ENCODE measurements at regions of chr3 and their contacts with region 1.

Region 1: GRCh38 chr3:112293368-112294321 is at the start of gene SLC9C1:
- DNase-seq: peak; percentile 54
- H3K4me3 ChIP-seq: no peak within 1 kb of the TSS; a peak in 1 of 4 replicates
- H3K27ac ChIP-seq: no peak within 1 kb of the TSS
- H3K4me1 ChIP-seq: peaks cover 0 to 5% of the 10 kb centered on the region in 2 experiments; a peak in 1 of 4 replicates
- H3K27me3 ChIP-seq: no peaks in the 10 kb centered on the region
- CTCF ChIP-seq: peak; percentile 70
- EP300 ChIP-seq: no peak
- RAD21 ChIP-seq: peak; percentile 91
- polyA plus RNA-seq, gene SLC9C1: not detected in 2 replicates

Region 2: DNA sequence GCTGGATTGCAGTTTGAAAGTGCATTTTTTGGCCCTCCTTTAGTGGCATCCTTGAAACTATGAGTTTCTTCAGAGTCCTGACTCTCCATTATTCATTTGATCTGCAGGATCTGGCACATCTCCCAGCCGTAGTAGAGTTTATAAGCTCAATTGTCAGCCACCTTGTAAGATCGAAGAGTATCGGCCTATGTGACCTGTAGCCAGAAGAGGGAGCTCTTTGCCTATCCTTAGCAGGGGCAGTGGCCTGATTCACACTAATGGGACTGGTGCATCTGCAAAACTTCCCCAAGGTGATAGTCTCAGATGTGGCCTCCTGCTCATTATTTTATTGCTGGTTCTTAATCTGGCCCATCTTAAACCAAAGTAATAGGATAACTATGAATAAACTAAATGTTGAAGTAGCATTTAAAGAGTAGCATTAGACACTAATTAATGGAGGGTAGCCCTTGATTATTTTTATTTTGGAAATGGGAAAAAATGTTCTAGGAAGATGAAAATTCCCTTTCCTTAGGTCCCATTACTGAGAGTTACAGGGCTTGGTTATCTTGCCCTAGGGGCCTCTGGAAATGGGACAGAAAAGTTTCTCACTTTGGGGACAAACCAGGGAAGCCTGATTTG is 181.8 kb before region 1 on chr3:
- CTCF ChIA-PET with region 1: interaction called, 22 read pairs
- POLR2A ChIA-PET with region 1: no interaction called
- DNase-seq: peak; percentile 70
- H3K4me3 ChIP-seq: no peak overlapping the region; a peak in 1 of 4 replicates
- H3K27ac ChIP-seq: no peak overlapping the region
- H3K4me1 ChIP-seq: no peaks in the 10 kb centered on the region; a peak in 1 of 4 replicates
- H3K27me3 ChIP-seq: no peaks in the 10 kb centered on the region
- CTCF ChIP-seq: peak; percentile 72
- EP300 ChIP-seq: no peak
- RAD21 ChIP-seq: peak; percentile 89

Region 3: DNA sequence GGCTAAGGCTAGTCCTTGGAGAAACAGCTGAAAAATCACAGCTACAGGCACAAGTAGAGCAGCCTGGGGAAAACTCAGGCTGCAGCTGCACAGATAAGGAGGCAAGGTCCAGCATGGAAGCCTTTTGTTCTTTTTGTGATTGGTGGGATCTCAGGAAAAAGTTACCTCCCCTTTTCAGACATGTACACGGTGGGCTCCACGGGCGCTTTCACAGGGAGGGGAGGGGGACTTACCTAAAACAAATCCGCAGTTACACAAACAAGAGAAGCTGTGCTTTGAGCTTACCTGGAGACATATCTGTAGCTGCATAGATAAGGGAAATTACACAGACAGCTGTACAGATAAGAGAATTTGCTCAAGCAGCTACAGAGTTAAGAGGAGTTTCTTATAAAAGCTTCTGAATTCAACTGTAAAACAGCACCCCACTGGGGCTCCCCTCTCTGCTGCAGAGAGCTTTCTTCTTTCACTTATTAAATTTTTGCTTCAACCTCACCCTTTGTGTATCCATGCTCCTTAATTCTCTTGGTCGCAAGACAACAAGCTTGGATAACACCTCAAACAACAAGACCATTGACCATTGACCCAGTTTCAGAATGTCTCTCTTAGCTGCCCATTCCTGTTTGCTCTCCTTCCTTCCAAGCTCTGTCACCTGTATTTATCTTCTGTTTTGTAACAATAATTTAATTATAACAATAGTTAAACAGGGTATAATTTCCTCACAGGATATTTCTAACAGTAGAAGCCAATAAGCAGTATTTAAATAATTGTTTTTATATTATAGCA is 28.4 kb after region 1 on chr3:
- CTCF ChIA-PET with region 1: interaction called, 20 read pairs
- POLR2A ChIA-PET with region 1: no interaction called
- DNase-seq: peak; percentile 29
- H3K4me3 ChIP-seq: no peak overlapping the region; a peak in 1 of 4 replicates
- H3K27ac ChIP-seq: peak overlapping the region in 1 of 2 experiments; percentile 68; a peak in 1 of 4 replicates
- H3K4me1 ChIP-seq: peaks cover 0 to 4% of the 10 kb centered on the region in 2 experiments; a peak in 2 of 4 replicates
- H3K27me3 ChIP-seq: no peaks in the 10 kb centered on the region; the same call in 1 of the 2 replicates
- CTCF ChIP-seq: no peak
- EP300 ChIP-seq: no peak
- RAD21 ChIP-seq: no peak

Region 4: DNA sequence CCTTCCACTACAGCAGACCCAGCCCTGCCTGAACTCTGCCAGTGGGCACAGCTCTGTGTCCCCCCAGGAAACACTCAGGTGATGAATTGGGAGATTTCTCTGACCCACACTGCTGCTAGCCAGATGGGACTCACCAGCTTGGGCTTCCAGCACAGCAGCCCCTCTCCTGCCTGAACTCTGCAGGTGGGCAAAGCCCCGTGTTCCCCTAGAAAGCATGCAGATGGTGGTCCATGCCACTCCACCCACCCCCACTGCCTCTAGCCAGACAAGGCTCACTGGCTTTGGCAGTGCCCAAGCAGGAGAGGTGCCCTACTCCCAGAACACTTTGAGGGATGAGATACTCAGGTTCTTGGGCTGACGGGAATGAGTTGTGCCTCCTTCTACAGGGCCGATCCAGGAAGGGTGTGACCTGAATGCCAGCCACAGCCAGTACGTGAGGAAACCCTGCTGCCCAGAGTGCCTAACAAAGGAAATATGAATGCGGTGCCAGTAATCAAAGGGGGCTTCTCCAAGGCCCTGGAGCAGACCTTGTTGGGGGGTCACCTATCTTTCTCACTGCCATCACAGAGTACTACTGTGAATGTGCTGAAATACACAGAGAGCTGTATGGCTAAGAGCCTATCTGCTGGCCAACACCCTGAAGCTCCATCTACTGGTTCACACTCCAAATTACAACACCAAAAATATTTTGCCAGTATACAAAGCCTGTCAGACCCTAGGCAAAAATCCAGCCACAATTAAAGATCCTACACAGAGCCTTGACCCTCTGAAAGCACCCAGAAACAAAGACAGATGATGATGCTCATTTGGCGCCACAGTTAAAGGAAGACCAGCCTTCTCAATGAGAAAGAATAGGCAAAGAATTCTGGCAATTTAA is 143.7 kb after region 1 on chr3:
- CTCF ChIA-PET with region 1: interaction called, 14 read pairs
- POLR2A ChIA-PET with region 1: no interaction called
- DNase-seq: no peak
- H3K4me3 ChIP-seq: no peak overlapping the region
- H3K27ac ChIP-seq: no peak overlapping the region
- H3K4me1 ChIP-seq: no peaks in the 10 kb centered on the region
- H3K27me3 ChIP-seq: no peaks in the 10 kb centered on the region
- CTCF ChIP-seq: peak; percentile 42
- EP300 ChIP-seq: no peak
- RAD21 ChIP-seq: peak; percentile 42; the same call in 1 of the 2 replicates

Region 5: GRCh38 chr3:112531358-112531781 is 237.7 kb after region 1 on chr3:
- CTCF ChIA-PET with region 1: interaction called, 24 read pairs
- POLR2A ChIA-PET with region 1: no interaction called
- DNase-seq: peak; percentile 27
- H3K4me3 ChIP-seq: no peak overlapping the region
- H3K27ac ChIP-seq: no peak overlapping the region
- H3K4me1 ChIP-seq: no peaks in the 10 kb centered on the region
- H3K27me3 ChIP-seq: no peaks in the 10 kb centered on the region
- CTCF ChIP-seq: peak; percentile 77
- EP300 ChIP-seq: no peak
- RAD21 ChIP-seq: peak; percentile 43

Region 6: DNA sequence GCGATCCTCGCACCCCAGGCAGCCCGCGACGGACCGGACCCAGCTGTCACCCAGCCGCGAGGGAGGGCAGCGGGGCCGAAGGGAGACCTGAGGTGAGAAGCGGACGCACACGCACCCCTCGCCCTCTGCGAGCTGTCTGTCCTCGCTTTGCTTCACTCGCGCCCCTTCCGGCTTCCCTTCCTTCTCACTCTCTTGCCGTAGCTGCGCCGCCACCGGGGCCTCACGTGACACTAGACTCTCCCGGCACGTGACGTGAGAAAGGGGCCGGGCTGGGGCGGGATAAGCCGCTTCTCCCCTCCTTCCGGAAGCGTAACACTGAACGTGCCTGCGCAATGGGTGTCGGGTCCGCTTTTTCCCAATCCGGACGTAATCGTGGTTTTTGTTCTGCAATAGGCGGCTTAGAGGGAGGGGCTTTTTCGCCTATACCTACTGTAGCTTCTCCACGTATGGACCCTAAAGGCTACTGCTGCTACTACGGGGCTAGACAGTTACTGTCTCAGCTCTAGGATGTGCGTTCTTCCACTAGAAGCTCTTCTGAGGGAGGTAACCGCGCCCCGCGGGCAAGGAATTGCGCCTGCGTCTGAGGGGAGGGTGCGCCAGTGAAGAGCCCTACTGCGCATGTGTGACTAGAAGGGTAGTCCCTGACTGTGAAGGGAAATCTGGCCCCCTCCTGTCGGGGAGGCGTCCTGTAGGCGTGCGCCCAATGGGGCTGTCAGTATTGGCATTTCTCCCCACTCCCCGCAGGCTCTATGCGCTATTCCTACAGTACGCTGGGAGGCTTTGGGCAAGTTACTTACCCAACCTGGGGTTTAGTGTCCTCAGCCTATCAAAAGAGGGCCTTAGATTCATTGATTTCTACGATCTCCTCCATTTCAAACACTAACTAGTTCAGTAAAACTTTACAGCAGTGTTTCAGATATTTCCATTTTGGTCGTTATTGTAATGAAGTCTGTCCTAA is 268.4 kb after region 1 on chr3 and contains the starts of genes ATG3 and SLC35A5:
- CTCF ChIA-PET with region 1: interaction called, 11 read pairs
- POLR2A ChIA-PET with region 1: no interaction called
- DNase-seq: peak; percentile 93
- H3K4me3 ChIP-seq: peak within 1 kb of the TSS; percentile 79 to 98
- H3K27ac ChIP-seq: peak within 1 kb of the TSS; percentile 98 to 99
- H3K4me1 ChIP-seq: peaks cover 10 to 14% of the 10 kb centered on the region in 2 experiments; a peak in 2 of 4 replicates
- H3K27me3 ChIP-seq: no peaks in the 10 kb centered on the region
- CTCF ChIP-seq: no peak
- EP300 ChIP-seq: no peak; a peak in 1 of 4 replicates
- RAD21 ChIP-seq: no peak
- polyA plus RNA-seq, gene ATG3: 38.8 and 39.7 TPM in 2 replicates
- polyA plus RNA-seq, gene SLC35A5: 16.0 and 23.2 TPM in 2 replicates